ENCODE measurements at regions of chr6 and their contacts with region 1.

Region 1: GRCh38 chr6:43667245-43668150 is 20.1 kb downstream of the MRPS18A start:
- DNase-seq: peak; percentile 74
- H3K4me3 Mint-ChIP-seq: no peak overlapping the region
- H3K27ac Mint-ChIP-seq: peak overlapping the region; percentile 69
- H3K4me1 Mint-ChIP-seq: peaks cover 47% of the 10 kb centered on the region
- H3K27me3 Mint-ChIP-seq: no peaks in the 10 kb centered on the region

Region 2: DNA sequence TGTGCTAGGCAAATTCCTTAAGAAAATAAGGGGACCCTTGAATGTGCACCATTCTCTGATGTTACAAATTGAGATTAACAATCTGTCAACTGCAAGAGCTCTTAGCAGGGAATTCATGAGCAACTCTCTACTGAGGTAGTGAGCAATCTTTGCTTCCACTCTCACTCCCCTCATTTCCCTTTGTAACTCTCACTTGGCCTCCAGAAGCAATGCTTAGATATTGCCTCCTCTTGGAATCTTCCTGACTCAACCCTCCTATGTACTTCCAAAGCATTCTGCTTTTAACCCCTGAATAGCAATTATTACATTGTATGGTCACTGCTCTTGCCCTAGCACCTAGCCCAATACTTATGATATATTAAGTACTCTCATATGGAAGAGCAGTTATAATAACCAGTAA is 108.2 kb before region 1 on chr6:
- CTCF ChIA-PET with region 1: no interaction called
- POLR2A ChIA-PET with region 1: no interaction called
- DNase-seq: no peak
- H3K4me3 Mint-ChIP-seq: no peak overlapping the region
- H3K27ac Mint-ChIP-seq: no peak overlapping the region
- H3K4me1 Mint-ChIP-seq: no peaks in the 10 kb centered on the region
- H3K27me3 Mint-ChIP-seq: no peaks in the 10 kb centered on the region

Region 3: DNA sequence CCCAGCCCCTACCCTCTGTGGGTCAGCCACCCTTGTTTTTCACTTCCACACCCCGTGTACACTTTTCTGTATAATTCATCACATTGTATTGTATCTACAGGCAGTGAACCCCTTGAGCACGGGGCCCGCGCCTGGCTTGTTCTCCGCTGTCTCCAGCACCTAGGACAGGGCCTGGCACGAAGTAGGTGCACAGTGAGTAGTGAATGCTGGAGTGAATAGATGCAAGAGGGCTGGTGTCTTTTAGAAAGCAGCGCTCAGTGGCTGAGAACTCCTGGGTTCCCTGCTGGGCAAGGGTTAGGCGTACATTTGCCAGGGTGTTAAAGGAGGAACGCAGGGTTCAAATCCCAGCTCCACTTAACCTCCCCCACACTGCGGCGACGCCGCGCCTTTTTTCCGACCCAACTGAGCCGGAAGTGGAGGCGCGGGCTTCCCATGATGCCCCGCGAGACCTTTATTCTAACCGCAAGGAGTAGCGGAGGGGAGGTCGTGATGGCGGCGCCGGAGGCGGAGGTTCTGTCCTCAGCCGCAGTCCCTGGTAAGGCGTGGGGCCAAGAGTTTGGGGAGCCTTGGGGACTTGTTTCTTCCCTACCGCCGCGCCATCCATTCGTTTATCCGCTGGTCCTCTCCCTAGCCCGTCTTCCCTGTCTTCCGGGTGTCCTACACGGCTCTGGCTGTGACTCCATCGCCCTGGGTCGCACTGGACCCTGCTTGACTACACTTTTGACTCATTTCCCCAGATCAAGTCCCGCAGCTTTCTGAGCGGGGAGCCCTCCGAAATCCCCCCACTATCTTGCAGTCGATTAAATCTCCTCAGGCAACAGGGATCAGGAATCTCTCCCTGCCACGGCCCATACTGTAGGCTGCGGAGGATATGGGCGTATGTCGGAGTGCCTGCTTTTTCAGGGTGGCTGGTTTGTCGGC is 31.9 kb before region 1 on chr6 and contains the start of gene MAD2L1BP:
- CTCF ChIA-PET with region 1: interaction called, 11 read pairs
- POLR2A ChIA-PET with region 1: no interaction called
- DNase-seq: peak; percentile 91
- H3K4me3 Mint-ChIP-seq: peak within 1 kb of the TSS; percentile 98
- H3K27ac Mint-ChIP-seq: peak within 1 kb of the TSS; percentile 93
- H3K4me1 Mint-ChIP-seq: peaks cover 50% of the 10 kb centered on the region
- H3K27me3 Mint-ChIP-seq: no peaks in the 10 kb centered on the region
- total RNA-seq, gene MAD2L1BP: 41.8 to 44.3 TPM

Region 4: GRCh38 chr6:43682724-43683429 is 15.4 kb after region 1 on chr6:
- CTCF ChIA-PET with region 1: interaction called, 46 read pairs
- POLR2A ChIA-PET with region 1: no interaction called
- DNase-seq: no peak
- H3K4me3 Mint-ChIP-seq: no peak overlapping the region
- H3K27ac Mint-ChIP-seq: no peak overlapping the region
- H3K4me1 Mint-ChIP-seq: peaks cover 35% of the 10 kb centered on the region
- H3K27me3 Mint-ChIP-seq: no peaks in the 10 kb centered on the region